WTC11 (cell line): ENCODE measurements at regions of chr11 and their contacts with region 1.

Region 1: DNA sequence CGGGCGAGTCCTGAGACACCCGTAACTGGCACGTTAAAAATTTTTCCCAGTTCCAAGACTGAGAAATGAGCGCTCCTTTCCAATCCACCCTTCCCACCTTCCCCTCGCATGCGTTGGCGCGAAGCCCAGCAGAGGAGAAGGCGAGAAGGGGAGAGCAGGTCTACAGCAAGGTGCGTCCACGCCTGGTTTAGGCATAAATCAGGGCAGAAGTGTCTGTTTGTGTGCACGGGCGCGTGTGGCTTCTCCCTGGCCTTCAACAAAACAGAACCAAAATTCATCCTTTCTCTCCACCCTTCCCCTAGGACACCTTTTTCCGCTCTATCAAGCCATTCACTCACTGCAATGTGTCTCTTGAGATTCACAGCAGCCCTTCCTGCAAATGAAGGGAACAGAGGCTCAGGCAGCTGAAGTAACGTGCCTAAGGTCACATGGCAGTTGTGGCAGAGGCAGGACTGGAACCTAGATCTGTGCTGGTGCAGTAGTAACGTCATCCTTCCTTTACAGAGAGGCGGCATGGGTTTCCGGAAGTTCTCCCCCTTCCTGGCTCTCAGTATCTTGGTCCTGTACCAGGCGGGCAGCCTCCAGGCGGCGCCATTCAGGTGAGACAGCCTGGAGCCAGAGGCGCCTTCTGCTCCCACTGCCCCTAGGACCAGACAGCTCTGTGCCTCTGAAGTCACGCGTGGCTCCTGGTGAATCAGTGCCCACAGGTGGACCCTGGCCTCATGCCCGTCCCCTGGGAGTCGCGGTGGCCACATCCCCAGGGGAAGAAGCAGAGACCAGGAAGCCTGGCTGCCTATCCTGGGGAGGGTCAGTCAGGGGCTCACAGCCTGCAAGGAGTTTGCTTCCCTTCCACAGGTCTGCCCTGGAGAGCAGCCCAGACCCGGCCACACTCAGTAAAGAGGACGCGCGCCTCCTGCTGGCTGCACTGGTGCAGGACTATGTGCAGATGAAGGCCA is 1.1 kb downstream of the CALCB start:
- DNase-seq: peak; percentile 97
- ATAC-seq: peak; percentile 91
- H3K4me3 Mint-ChIP-seq: peak overlapping the region; percentile 78
- H3K27ac Mint-ChIP-seq: no peak overlapping the region
- H3K4me1 Mint-ChIP-seq: peaks cover 17% of the 10 kb centered on the region
- H3K27me3 Mint-ChIP-seq: peaks cover 51% of the 10 kb centered on the region
- CTCF ChIP-seq: peak; percentile 73

Region 2: DNA sequence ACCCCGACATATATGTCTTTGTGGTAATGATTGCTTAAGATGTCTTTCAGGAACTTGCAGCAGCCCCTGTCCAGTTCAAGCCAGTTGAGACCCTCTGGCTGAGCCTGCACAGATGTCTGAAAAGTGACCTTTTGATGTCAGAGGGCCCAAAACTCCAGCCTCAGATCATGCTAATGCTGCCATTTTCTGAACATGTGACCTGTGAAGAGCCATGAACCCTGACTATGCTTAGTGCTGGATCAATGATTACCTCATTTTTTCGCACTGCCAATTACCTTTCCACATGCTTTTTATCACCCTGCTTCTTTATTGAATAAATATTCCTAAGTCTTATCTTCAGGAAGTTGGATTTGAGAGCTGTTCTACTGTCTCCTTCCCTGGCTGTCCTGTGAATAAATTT is 175.6 kb before region 1 on chr11:
- CTCF ChIA-PET with region 1: no interaction called
- POLR2A ChIA-PET with region 1: no interaction called
- DNase-seq: no peak
- ATAC-seq: no peak
- H3K4me3 Mint-ChIP-seq: no peak overlapping the region
- H3K27ac Mint-ChIP-seq: no peak overlapping the region
- H3K4me1 Mint-ChIP-seq: peaks cover 9% of the 10 kb centered on the region
- H3K27me3 Mint-ChIP-seq: peaks cover 1% of the 10 kb centered on the region
- CTCF ChIP-seq: no peak

Region 3: GRCh38 chr11:15006139-15006759 is 68.2 kb before region 1 on chr11:
- CTCF ChIA-PET with region 1: interaction called, 34 read pairs
- POLR2A ChIA-PET with region 1: no interaction called
- DNase-seq: no peak
- ATAC-seq: peak; percentile 88
- H3K4me3 Mint-ChIP-seq: no peak overlapping the region
- H3K27ac Mint-ChIP-seq: no peak overlapping the region
- H3K4me1 Mint-ChIP-seq: no peaks in the 10 kb centered on the region
- H3K27me3 Mint-ChIP-seq: no peaks in the 10 kb centered on the region
- CTCF ChIP-seq: peak; percentile 20; the same call in 1 of the 2 replicates

Region 4: GRCh38 chr11:15038963-15039362 is 35.5 kb before region 1 on chr11:
- CTCF ChIA-PET with region 1: interaction called, 34 read pairs
- POLR2A ChIA-PET with region 1: interaction called, 3 read pairs
- DNase-seq: no peak
- ATAC-seq: no peak
- H3K4me3 Mint-ChIP-seq: no peak overlapping the region
- H3K27ac Mint-ChIP-seq: no peak overlapping the region
- H3K4me1 Mint-ChIP-seq: peaks cover 27% of the 10 kb centered on the region
- H3K27me3 Mint-ChIP-seq: no peaks in the 10 kb centered on the region
- CTCF ChIP-seq: no peak

Region 5: DNA sequence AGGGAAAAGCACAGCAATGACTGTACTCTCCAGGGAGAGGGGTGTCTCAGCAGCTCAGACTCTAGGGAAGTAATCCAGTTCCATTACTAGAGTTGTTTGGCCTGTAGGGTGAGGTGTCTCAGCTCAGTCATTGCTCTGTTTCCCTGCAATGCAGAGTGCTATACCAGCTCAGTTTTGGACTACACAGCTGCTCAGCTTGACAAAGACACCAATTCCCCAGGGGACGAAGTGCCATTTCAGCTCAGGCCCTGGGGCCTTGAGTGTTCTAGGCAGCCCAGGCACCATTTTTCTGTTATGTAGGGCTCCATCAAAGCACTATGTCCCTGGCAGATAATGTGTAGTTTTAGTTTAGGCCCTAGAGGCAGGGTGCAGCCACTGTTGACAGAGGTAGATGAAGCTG is 17.1 kb after region 1 on chr11:
- CTCF ChIA-PET with region 1: interaction called, 24 read pairs
- POLR2A ChIA-PET with region 1: no interaction called
- DNase-seq: no peak
- ATAC-seq: no peak
- H3K4me3 Mint-ChIP-seq: no peak overlapping the region
- H3K27ac Mint-ChIP-seq: no peak overlapping the region
- H3K4me1 Mint-ChIP-seq: peaks cover under 1% of the 10 kb centered on the region; the same call in 1 of the 2 replicates
- H3K27me3 Mint-ChIP-seq: no peaks in the 10 kb centered on the region
- CTCF ChIP-seq: no peak

Region 6: GRCh38 chr11:15101072-15101709 is 26.7 kb after region 1 on chr11:
- CTCF ChIA-PET with region 1: interaction called, 12 read pairs
- POLR2A ChIA-PET with region 1: no interaction called
- DNase-seq: peak; percentile 77
- ATAC-seq: peak; percentile 96
- H3K4me3 Mint-ChIP-seq: no peak overlapping the region
- H3K27ac Mint-ChIP-seq: no peak overlapping the region
- H3K4me1 Mint-ChIP-seq: no peaks in the 10 kb centered on the region
- H3K27me3 Mint-ChIP-seq: peaks cover 3% of the 10 kb centered on the region; the same call in 1 of the 2 replicates
- CTCF ChIP-seq: peak; percentile 71; the same call in 1 of the 2 replicates

Region 7: GRCh38 chr11:15113381-15113780 is 38.9 kb after region 1 on chr11:
- CTCF ChIA-PET with region 1: interaction called, 15 read pairs
- POLR2A ChIA-PET with region 1: no interaction called
- DNase-seq: no peak
- ATAC-seq: no peak
- H3K4me3 Mint-ChIP-seq: peak overlapping the region; percentile 16; the same call in 1 of the 2 replicates
- H3K27ac Mint-ChIP-seq: no peak overlapping the region
- H3K4me1 Mint-ChIP-seq: peaks cover 11% of the 10 kb centered on the region
- H3K27me3 Mint-ChIP-seq: peaks cover 34% of the 10 kb centered on the region
- CTCF ChIP-seq: no peak

Region 8: DNA sequence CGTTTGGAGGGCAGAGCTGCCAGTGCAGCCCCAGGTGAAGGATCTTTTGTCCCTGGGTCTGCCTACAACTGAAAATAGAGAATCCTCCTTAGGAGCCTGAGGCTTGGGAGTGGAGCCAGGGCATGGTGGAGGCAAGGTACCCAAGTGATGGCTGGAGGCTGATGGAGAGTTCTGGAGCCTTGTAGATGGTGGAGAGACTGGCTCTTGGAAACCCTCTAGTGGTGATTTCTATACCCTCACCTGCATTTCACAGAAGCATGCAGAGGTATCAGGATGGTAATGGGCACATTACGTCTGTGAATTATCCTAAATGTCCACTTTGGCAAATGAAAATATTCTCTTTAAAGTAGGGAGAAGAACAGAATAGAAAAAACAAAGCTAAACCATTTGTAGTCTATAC is 84.6 kb after region 1 on chr11:
- CTCF ChIA-PET with region 1: interaction called, 11 read pairs
- POLR2A ChIA-PET with region 1: no interaction called
- DNase-seq: no peak
- ATAC-seq: peak; percentile 97
- H3K4me3 Mint-ChIP-seq: no peak overlapping the region
- H3K27ac Mint-ChIP-seq: no peak overlapping the region
- H3K4me1 Mint-ChIP-seq: no peaks in the 10 kb centered on the region
- H3K27me3 Mint-ChIP-seq: no peaks in the 10 kb centered on the region
- CTCF ChIP-seq: peak; percentile 42; the same call in 1 of the 2 replicates

Region 9: GRCh38 chr11:15370495-15371147 is 296.1 kb after region 1 on chr11:
- CTCF ChIA-PET with region 1: no interaction called
- POLR2A ChIA-PET with region 1: no interaction called
- DNase-seq: no peak
- ATAC-seq: no peak
- H3K4me3 Mint-ChIP-seq: no peak overlapping the region
- H3K27ac Mint-ChIP-seq: no peak overlapping the region
- H3K4me1 Mint-ChIP-seq: peaks cover 23% of the 10 kb centered on the region
- H3K27me3 Mint-ChIP-seq: no peaks in the 10 kb centered on the region
- CTCF ChIP-seq: no peak

Region 10: DNA sequence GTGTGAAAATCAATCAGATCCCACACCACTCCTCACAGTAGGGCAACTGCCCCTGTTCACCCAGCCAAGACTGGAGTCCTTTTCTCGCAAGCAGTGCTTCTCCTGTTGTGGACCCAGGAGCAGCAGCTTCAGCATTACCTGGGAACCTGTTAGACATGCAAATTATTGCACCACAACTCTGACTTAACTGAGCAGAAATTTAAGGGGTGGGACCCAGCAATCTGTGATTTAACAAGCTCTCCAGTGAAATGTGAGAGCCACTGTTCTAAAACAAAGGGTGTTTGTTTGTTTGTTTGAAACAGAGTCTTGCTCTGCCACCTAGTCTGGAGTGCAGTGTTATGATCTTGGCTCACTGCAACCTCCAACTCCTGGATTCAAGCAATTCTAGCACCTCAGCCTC is 690.5 kb after region 1 on chr11:
- CTCF ChIA-PET with region 1: no interaction called
- POLR2A ChIA-PET with region 1: no interaction called
- DNase-seq: no peak
- ATAC-seq: peak; percentile 41
- H3K4me3 Mint-ChIP-seq: no peak overlapping the region
- H3K27ac Mint-ChIP-seq: no peak overlapping the region
- H3K4me1 Mint-ChIP-seq: peaks cover 17% of the 10 kb centered on the region
- H3K27me3 Mint-ChIP-seq: no peaks in the 10 kb centered on the region
- CTCF ChIP-seq: no peak